ENCODE measurements at regions of chr14 and their contacts with region 1.

Region 1: GRCh38 chr14:24051789-24052655 is at the start of gene CARMIL3:
- DNase-seq: peak; percentile 60
- H3K4me3 Mint-ChIP-seq: peak within 1 kb of the TSS; percentile 65
- H3K27ac Mint-ChIP-seq: peak within 1 kb of the TSS; percentile 28
- H3K4me1 Mint-ChIP-seq: peaks cover 18% of the 10 kb centered on the region
- H3K27me3 Mint-ChIP-seq: peaks cover 2% of the 10 kb centered on the region
- total RNA-seq, gene CARMIL3: 0.48 to 0.99 TPM

Region 2: DNA sequence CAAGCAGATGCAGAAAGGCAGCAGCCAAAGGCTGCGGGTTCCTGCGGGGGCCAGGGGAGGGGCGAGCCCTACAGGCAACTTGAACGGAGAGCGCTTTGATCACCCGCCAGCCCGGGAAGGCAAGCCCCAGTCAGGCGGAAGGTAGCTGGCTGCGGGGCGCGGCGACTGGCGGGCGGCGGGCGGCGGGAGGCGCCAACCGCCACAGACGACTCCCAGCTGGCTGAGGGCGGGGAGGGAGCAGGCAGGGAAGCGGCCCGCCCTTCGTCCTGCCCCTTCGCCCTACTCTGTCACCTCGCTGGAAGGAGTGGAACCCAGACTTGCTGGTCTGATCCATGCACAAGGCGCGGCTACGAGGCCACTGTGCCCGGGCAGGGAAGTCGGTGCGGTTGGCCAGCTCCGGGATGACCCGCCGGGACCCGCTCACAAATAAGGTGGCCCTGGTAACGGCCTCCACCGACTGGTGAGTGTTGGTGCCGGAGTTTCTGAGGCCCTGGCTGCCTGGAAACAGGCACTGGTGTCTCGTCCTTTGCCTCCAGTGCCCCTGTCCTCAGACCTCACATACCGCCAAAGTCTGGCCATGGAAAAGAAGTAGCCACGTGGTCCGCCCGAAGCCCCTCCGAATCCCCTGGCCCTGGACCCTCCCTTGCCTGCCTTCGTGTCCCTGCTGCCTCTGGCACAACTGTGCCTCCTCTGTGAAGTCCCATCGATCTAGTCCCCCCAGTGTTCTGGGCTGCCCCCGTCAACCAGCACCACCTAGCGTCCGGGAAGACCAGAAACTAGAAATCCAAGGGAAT is 15.7 kb before region 1 on chr14:
- CTCF ChIA-PET with region 1: interaction called, 4 read pairs
- intact Hi-C with region 1: loop called (anchors 1 kb)
- DNase-seq: peak; percentile 78
- H3K4me3 Mint-ChIP-seq: peak overlapping the region; percentile 91
- H3K27ac Mint-ChIP-seq: peak overlapping the region; percentile 83
- H3K4me1 Mint-ChIP-seq: peaks cover 5% of the 10 kb centered on the region
- H3K27me3 Mint-ChIP-seq: no peaks in the 10 kb centered on the region

Region 3: DNA sequence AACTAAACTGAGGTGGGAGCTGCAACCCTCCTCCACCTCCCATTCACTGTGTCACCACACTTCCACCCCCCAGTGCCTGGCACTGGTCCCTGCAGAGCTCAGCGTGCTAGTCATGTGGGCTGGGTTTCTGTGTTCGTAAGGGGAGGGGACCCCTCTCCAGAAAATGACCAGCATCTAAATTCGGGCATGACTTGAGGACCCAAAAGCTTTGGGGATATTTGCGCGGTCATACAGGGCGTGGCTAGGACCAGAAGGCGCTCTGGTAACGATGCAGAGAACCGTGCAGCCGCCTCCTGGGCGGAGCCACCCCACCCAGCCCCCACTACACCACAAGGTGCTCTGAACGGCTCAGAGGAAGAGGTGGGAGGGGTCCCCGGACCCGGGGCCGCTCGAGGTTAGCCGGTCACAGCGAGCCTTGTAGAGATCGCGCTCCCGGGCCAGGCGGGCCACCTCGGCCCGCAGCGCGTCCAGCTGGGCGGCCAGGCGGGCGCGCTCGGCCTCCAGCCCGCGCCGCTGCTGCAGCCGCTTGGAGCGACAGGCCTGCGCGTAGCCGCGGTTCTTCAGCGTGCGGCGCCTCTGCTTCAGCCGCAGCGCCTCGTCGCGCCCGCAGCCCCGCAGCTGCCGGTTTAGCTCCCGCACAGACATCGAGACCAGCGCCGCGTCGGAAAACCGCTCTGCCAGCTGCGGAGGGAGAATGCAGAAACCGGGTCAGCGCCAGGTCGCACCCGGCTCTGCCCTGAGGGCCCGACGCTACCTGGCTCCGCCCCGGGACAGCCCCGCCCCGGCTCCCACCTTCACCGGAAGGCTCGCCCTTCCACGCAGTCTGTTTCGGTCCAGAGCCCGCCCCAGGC is 29.1 kb after region 1 on chr14:
- CTCF ChIA-PET with region 1: interaction called, 64 read pairs
- intact Hi-C with region 1: no loop called
- DNase-seq: peak; percentile 74
- H3K4me3 Mint-ChIP-seq: peak overlapping the region; percentile 74
- H3K27ac Mint-ChIP-seq: no peak overlapping the region
- H3K4me1 Mint-ChIP-seq: peaks cover 15% of the 10 kb centered on the region
- H3K27me3 Mint-ChIP-seq: no peaks in the 10 kb centered on the region

Measured in activated naive CD4-positive, alpha-beta T cell treated with anti-CD3 and anti-CD28 coated beads for 36 hours (primary cell).